K562 (cell line): ENCODE measurements at regions of chr2 and their contacts with region 1.

Region 1: DNA sequence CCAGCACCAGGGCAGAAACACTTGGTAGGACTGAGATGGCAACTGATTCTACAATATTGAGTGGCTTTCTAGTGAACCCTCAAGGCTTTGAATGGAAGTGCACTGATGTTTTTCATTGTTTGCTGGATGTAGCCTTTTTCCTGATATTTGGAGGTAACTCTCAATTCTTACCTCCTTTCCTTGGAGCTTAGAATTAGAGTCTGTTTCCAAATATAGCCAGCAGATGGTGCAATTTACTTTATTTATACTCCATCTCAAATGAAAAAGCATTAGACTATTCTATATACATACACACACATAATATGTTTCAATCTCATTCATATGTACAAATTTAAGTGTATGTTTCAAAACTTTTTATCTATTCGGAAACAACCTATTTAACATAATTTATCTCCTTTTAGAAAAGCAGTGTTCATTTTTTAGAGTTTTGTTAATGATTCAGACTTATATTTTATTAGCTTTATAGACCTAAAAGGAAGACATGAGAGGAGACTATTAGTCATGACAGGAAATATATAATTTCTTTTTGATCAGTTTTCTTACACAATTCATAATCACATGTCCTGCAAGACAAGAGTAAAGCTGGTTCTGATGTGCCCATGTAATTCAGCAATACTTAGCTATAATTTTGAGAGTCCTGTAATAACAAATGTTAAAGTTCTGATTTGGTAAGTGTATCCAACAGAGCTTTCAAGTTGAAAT is 124.8 kb downstream of the NUP35 start:
- DNase-seq: peak; percentile 27 to 50 (median 36)
- ATAC-seq: peak; percentile 87
- H3K4me3 ChIP-seq: no peak overlapping the region
- H3K27ac ChIP-seq: no peak overlapping the region
- H3K4me1 ChIP-seq: no peaks in the 10 kb centered on the region
- H3K27me3 ChIP-seq: peaks cover 0 to 7% of the 10 kb centered on the region in 2 experiments; a peak in 1 of 5 replicates
- CTCF ChIP-seq: peak; percentile 25 to 76 (median 51); a peak in 5 of 6 replicates
- EP300 ChIP-seq: no peak
- POLR2A ChIP-seq: no peak
- RAD21 ChIP-seq: peak; percentile 58 to 78

Region 2: DNA sequence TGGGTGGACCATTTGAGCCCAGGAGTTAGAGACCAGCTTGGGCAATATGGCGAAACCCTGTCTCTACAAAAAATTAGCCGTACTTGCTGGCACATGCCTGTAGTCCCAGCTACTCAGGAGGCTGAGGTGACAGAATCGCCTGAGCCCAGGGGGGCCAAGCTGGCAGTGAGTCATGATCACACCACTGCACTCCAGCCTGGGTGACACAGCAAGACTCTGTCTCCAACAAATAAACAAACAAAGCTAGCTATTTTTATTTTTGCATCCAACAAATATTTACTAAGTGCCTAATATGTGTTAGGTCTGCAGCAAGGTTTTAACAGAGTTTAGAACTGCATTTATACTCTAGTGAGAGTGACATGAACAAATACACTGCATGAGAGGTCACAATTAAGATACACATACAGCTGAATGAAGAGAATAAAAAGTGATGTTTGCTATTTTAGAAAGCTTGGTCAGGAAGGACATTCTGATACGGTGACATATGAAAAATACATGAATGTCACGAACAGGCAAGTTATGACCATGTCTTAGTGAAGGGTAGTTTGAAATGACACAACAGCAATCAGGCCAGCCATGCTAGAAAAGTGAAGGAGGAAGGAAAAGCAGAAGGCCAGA is 299.3 kb before region 1 on chr2:
- CTCF ChIA-PET with region 1: no interaction called
- POLR2A ChIA-PET with region 1: no interaction called
- in situ Hi-C with region 1: no loop called
- intact Hi-C with region 1: no loop called
- DNase-seq: peak in 2 of 4 experiments; percentile 55 to 77
- ATAC-seq: peak; percentile 92
- H3K4me3 ChIP-seq: no peak overlapping the region
- H3K27ac ChIP-seq: peak overlapping the region; percentile 92
- H3K4me1 ChIP-seq: peaks cover 4 to 17% of the 10 kb centered on the region in 2 experiments; a peak in 4 of 5 replicates
- H3K27me3 ChIP-seq: no peaks in the 10 kb centered on the region
- CTCF ChIP-seq: no peak
- EP300 ChIP-seq: no peak; the same call in 1 of the 2 replicates
- POLR2A ChIP-seq: no peak
- RAD21 ChIP-seq: no peak

Region 3: GRCh38 chr2:183359867-183360266 is 110.8 kb after region 1 on chr2:
- CTCF ChIA-PET with region 1: no interaction called
- POLR2A ChIA-PET with region 1: no interaction called
- in situ Hi-C with region 1: no loop called
- intact Hi-C with region 1: loop called (anchors 5 kb)
- DNase-seq: no peak
- ATAC-seq: no peak
- H3K4me3 ChIP-seq: no peak overlapping the region
- H3K27ac ChIP-seq: no peak overlapping the region
- H3K4me1 ChIP-seq: no peaks in the 10 kb centered on the region
- H3K27me3 ChIP-seq: no peaks in the 10 kb centered on the region
- CTCF ChIP-seq: no peak
- EP300 ChIP-seq: no peak
- POLR2A ChIP-seq: no peak
- RAD21 ChIP-seq: no peak

Region 4: DNA sequence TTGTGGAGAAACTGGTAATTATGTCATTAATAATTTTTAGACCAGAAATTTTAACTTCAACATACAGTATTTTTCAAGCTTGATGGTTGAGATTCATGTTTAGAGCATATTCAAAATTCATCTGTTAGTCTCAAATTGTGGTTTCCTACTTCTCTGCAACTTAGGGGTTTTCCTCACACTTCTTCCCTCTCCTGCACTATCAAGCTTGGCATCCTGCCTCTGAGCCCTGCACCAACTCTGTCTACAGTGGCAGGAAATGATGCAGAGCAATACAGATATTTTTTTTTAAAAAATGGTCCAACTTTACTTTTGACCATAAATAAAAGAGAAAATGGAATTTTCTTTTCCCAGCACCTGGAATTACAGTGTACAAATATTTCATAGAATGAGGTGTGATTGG is 122.5 kb after region 1 on chr2:
- CTCF ChIA-PET with region 1: no interaction called
- POLR2A ChIA-PET with region 1: no interaction called
- in situ Hi-C with region 1: no loop called
- intact Hi-C with region 1: no loop called
- DNase-seq: no peak
- ATAC-seq: no peak
- H3K4me3 ChIP-seq: no peak overlapping the region
- H3K27ac ChIP-seq: no peak overlapping the region
- H3K4me1 ChIP-seq: no peaks in the 10 kb centered on the region
- H3K27me3 ChIP-seq: no peaks in the 10 kb centered on the region
- CTCF ChIP-seq: no peak
- EP300 ChIP-seq: no peak
- POLR2A ChIP-seq: no peak
- RAD21 ChIP-seq: no peak